CD4-positive, alpha-beta memory T cell (primary cell): ENCODE measurements at regions of chr2 and their contacts with region 1.

Region 1: GRCh38 chr2:241859436-241860183 is 916 bp upstream of the PDCD1 start:
- DNase-seq: peak; percentile 26 to 71 (median 39)
- H3K4me3 ChIP-seq: peak overlapping the region; percentile 23 to 68
- H3K4me3 Mint-ChIP-seq: peak overlapping the region; percentile 87 to 96 (median 90)
- H3K27ac ChIP-seq: peak overlapping the region; percentile 64
- H3K27ac Mint-ChIP-seq: peak overlapping the region; percentile 92 to 98 (median 96)
- H3K4me1 ChIP-seq: peaks cover 84% of the 10 kb centered on the region
- H3K4me1 Mint-ChIP-seq: peaks cover 37 to 79% (median 55%) of the 10 kb centered on the region in 4 donors
- H3K27me3 ChIP-seq: no peaks in the 10 kb centered on the region
- H3K27me3 Mint-ChIP-seq: peaks cover 0 to 2% of the 10 kb centered on the region in 2 donors

Region 2: DNA sequence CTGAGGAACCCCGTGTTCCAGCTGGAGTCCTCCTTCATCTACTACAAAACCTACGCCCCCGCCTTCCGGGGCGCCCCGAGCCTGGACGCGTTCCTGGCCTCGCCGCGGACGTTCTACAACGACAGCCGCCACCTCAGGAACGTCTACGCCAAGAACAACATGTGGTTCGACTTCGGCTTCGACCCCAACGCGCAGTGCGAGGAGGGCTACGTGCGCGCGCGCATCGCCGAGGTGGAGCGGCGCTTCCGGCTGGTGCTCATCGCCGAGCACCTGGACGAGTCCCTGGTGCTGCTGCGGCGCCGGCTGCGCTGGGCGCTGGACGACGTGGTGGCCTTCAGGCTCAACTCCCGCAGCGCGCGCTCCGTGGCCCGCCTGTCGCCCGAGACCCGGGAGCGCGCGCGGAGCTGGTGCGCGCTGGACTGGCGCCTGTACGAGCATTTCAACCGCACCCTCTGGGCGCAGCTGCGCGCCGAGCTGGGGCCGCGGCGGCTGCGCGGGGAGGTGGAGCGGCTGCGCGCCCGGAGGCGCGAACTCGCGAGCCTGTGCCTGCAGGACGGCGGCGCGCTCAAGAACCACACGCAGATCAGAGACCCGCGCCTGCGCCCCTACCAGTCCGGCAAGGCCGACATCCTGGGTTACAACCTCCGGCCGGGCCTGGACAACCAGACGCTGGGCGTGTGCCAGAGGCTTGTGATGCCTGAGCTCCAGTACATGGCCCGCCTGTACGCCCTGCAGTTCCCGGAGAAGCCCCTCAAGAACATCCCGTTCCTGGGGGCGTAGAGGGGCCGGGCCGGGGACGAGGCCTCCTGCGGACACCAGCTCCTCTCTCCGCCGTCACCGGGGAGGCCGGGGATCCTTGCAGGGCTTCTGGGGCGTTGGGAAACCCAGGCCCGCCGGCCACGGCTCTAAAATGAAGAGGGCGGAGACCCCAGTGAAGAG is 56.0 kb before region 1 on chr2:
- CTCF ChIA-PET with region 1: no interaction called
- POLR2A ChIA-PET with region 1: interaction called, 10 read pairs
- intact Hi-C with region 1: no loop called
- DNase-seq: peak; percentile 41 to 58 (median 48)
- H3K4me3 ChIP-seq: peak overlapping the region; percentile 36 to 47
- H3K4me3 Mint-ChIP-seq: peak overlapping the region; percentile 51 to 79 (median 71)
- H3K27ac ChIP-seq: no peak overlapping the region
- H3K27ac Mint-ChIP-seq: peak overlapping the region in 4 of 7 donors; percentile 35 to 87 (median 72)
- H3K4me1 ChIP-seq: peaks cover 20% of the 10 kb centered on the region
- H3K4me1 Mint-ChIP-seq: peaks cover 2 to 12% (median 8%) of the 10 kb centered on the region in 4 donors
- H3K27me3 ChIP-seq: no peaks in the 10 kb centered on the region
- H3K27me3 Mint-ChIP-seq: no peaks in the 10 kb centered on the region

Region 3: GRCh38 chr2:241844066-241844728 is 15.4 kb before region 1 on chr2:
- CTCF ChIA-PET with region 1: interaction called, 3 read pairs
- POLR2A ChIA-PET with region 1: interaction called, 23 read pairs
- intact Hi-C with region 1: loop called (anchors 1 kb)
- DNase-seq: peak; percentile 71 to 84 (median 73)
- H3K4me3 ChIP-seq: no peak overlapping the region
- H3K4me3 Mint-ChIP-seq: peak overlapping the region; percentile 76 to 88 (median 84)
- H3K27ac ChIP-seq: peak overlapping the region; percentile 14
- H3K27ac Mint-ChIP-seq: peak overlapping the region; percentile 57 to 94 (median 81)
- H3K4me1 ChIP-seq: peaks cover 34% of the 10 kb centered on the region
- H3K4me1 Mint-ChIP-seq: peaks cover 20 to 42% (median 31%) of the 10 kb centered on the region in 4 donors
- H3K27me3 ChIP-seq: no peaks in the 10 kb centered on the region
- H3K27me3 Mint-ChIP-seq: no peaks in the 10 kb centered on the region

Region 4: DNA sequence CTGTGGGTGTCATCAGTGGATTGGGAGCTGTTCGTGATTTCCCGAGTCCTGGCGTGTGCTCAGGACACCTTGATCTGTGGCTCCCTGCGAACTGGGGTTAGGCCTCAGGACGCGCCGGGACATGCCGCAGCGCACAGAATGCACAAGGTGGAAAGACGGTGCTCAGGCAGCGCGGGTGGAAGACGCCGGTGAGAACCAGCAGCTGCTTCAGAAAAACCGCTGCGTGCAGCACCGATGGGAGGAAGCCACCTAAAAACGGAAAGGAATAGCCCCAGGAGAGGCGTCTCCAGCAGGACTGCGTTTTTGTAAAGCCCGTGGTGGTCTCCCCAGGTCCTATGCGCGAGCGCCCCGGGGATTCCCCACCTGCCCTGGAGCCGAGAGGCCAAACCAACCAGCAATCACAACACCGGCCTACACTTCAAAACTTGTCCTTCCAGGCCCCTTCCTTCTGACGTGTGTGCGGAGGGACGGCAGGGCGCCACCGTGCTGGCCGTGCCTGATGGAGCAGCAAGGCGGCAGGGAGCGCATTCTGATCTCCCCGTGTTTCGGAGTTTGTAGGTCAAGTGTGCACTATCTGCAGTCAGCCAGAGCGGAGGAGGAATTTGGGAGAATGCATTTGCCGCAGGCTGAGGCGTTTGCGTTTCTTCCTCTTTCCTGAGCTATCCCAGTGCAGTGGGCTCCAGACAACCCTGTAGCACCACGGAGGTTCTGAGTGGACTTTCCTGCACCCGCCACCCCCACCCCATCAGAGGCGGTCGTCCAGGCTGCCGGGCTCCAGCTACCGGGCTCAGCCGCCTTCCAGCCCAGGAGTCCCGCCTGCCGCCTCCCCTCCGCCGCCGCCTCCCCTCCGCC is 42.1 kb after region 1 on chr2:
- CTCF ChIA-PET with region 1: no interaction called
- POLR2A ChIA-PET with region 1: no interaction called
- intact Hi-C with region 1: no loop called
- DNase-seq: no peak
- H3K4me3 ChIP-seq: no peak overlapping the region
- H3K4me3 Mint-ChIP-seq: peak overlapping the region in 2 of 8 donors; percentile 7 to 72
- H3K27ac ChIP-seq: no peak overlapping the region
- H3K27ac Mint-ChIP-seq: no peak overlapping the region
- H3K4me1 ChIP-seq: no peaks in the 10 kb centered on the region
- H3K4me1 Mint-ChIP-seq: peaks cover 0 to 14% (median under 1%) of the 10 kb centered on the region in 4 donors
- H3K27me3 ChIP-seq: no peaks in the 10 kb centered on the region
- H3K27me3 Mint-ChIP-seq: no peaks in the 10 kb centered on the region